Heart right ventricle (tissue), 16 donors: ENCODE measurements at regions of chr17 and their contacts with region 1.

Region 1: DNA sequence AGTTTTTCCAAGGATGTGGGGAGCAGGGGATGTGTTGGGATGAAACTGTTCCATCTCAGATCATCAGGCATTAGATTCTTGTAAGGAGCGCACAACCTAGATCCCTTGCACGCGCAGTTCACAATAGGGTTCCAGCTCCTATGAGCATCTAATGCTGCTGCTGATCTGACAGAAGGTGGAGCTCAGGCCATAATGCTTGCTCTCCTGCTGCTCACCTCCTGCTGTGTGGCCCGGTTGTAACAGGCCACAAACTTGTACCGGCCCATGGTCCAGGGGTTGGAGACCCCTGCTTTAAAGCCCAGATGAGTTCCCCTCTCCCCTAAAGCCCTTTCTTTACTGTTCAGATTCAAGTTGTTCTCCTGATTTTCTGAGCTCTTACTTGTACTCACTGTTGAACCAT is 44.8 kb downstream of the RNF135 start:
- DNase-seq: no peak
- ATAC-seq: peak in 1 of 8 donors; percentile 31
- H3K4me3 ChIP-seq: no peak overlapping the region
- H3K27ac ChIP-seq: no peak overlapping the region
- H3K4me1 ChIP-seq: peaks cover 0 to 14% (median 0%) of the 10 kb centered on the region in 9 donors
- H3K27me3 ChIP-seq: no peaks in the 10 kb centered on the region
- CTCF ChIP-seq: peak in 2 of 9 donors; percentile 29 to 34

Region 2: GRCh38 chr17:31094600-31095238 is 79.1 kb after region 1 on chr17 and contains the start of gene NF1:
- intact Hi-C with region 1: loop called in 1 of 10 experiments (anchors 10 kb)
- DNase-seq: peak; percentile 96
- ATAC-seq: peak; percentile 97 to 98 (median 98)
- H3K4me3 ChIP-seq: peak within 1 kb of the TSS; percentile 66 to 98 (median 89)
- H3K27ac ChIP-seq: peak within 1 kb of the TSS; percentile 83 to 98 (median 94)
- H3K4me1 ChIP-seq: peaks cover 0 to 27% (median 9%) of the 10 kb centered on the region in 9 donors
- H3K27me3 ChIP-seq: no peaks in the 10 kb centered on the region
- CTCF ChIP-seq: peak in 1 of 9 donors; percentile 6
- total RNA-seq, gene NF1: 41.9 to 71.0 (median 58.9) TPM

Region 3: DNA sequence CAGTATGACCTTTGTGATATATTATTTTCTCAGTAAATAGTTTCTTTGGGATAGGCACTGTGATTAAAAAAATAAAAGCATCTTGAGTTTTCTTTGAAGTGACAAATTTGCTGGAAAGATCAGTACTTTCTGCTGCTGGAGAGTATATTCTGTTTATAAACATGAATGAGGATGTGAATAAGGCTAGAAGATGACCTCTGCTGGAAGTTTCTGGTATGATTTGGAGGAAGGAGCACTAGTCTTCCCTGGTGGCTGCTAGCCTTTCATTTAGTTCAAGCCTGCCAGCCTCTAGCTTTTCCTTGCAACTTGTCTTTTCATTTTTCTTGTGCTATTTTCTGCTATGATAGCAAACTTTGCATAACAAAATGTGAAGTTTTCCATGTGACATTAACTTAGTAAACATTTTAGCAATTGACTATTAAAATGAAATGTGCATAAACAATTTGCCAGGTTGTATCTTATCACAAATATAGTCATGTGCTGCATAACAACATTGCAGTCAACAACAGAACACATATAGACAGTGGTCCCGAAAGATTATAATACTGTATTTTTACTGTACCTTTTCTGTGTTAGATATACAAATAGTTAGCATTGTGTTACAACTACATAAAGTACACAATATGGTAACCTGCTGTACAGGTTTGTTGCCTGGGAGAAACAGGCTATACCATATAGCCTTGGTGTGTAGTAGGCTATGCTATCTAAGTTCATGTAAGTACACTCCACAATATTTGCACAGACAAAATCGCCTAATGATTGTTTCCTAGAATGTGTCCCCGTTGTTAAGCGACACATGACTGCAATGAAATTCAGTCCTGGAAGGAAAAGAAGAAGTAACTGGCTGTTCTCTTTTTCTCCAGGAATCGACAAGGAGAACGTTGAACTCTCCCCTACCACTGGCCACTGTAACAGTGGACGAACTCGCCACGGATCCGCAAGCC is 357.8 kb after region 1 on chr17:
- intact Hi-C with region 1: loop called in 2 of 10 experiments (anchors 10 kb)
- DNase-seq: no peak
- ATAC-seq: peak in 7 of 8 donors; percentile 53 to 79 (median 69)
- H3K4me3 ChIP-seq: no peak overlapping the region
- H3K27ac ChIP-seq: peak overlapping the region in 1 of 10 donors; percentile 60
- H3K4me1 ChIP-seq: peaks cover 0 to 36% (median 5%) of the 10 kb centered on the region in 9 donors
- H3K27me3 ChIP-seq: no peaks in the 10 kb centered on the region
- CTCF ChIP-seq: peak in 7 of 9 donors; percentile 44 to 70 (median 50)